Heart right ventricle (tissue), 16 donors: ENCODE measurements at regions of chr10 and their contacts with region 1.

Region 1: DNA sequence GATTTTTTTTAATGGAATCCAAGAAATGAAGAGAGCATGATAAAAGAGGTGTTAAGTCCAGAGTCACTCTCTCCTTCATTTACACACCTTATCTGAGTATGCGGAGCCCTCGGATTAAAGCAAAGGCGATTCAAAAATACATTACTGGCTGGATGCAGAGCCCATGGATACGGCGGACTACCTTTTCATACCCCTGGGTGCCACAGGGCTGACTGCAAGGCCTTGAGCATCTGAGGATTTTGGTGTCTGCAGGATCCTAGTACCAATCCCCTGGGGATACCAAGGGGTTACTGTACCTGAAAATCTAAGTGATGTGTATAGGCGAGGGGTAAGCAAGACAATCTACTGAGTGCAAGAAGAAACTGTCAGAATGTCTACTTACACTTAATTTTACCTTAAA is 20.5 kb downstream of the PIP4K2A start:
- DNase-seq: no peak
- ATAC-seq: no peak
- H3K4me3 ChIP-seq: no peak overlapping the region
- H3K27ac ChIP-seq: peak overlapping the region in 1 of 10 donors; percentile 33
- H3K4me1 ChIP-seq: peaks cover 0 to 59% (median 14%) of the 10 kb centered on the region in 9 donors
- H3K27me3 ChIP-seq: no peaks in the 10 kb centered on the region
- CTCF ChIP-seq: no peak

Region 2: DNA sequence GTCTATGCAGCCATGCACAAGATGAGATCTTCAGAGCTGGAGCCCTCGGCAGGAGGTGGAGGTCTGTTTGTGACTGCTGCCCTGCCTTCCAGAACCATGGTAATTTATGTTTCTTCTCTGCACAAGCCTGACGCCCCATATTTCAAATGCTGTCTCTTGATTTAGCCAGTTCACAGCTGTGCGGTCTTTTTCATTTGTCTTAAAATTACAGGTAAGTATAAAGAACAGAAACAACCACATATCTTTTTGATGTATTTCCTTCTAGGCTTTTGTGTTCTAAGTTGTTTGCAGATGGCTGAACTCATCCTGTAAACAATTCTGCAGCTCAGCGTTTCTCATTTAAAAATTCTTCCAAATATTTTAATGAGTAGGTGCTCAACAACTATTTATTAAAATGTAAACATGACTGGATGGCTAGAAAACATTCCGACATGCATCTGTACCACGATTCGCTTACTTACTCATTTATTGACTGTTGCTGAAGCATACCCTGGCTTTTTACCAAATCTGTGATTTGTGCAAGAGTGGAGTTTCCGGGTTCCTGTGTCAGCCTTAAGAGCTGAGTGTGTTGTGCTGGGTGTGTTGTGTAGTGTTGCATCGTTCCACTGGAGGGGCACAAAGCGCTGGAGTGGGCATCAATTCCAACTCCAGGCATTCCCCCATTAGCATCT is 38.4 kb before region 1 on chr10:
- intact Hi-C with region 1: loop called in 1 of 10 experiments (anchors 2 kb)
- DNase-seq: no peak
- ATAC-seq: no peak
- H3K4me3 ChIP-seq: no peak overlapping the region
- H3K27ac ChIP-seq: peak overlapping the region in 1 of 10 donors; percentile 63
- H3K4me1 ChIP-seq: peaks cover 3 to 99% (median 27%) of the 10 kb centered on the region in 9 donors
- H3K27me3 ChIP-seq: no peaks in the 10 kb centered on the region
- CTCF ChIP-seq: no peak

Region 3: GRCh38 chr10:22742678-22743077 is 48.8 kb after region 1 on chr10:
- intact Hi-C with region 1: no loop called
- DNase-seq: no peak
- ATAC-seq: peak in 1 of 8 donors; percentile 45
- H3K4me3 ChIP-seq: no peak overlapping the region
- H3K27ac ChIP-seq: peak overlapping the region in 1 of 10 donors; percentile 62
- H3K4me1 ChIP-seq: peaks cover 0 to 23% (median 0%) of the 10 kb centered on the region in 9 donors
- H3K27me3 ChIP-seq: no peaks in the 10 kb centered on the region
- CTCF ChIP-seq: no peak